ENCODE measurements at regions of chr17 and their contacts with region 1.

Region 1: DNA sequence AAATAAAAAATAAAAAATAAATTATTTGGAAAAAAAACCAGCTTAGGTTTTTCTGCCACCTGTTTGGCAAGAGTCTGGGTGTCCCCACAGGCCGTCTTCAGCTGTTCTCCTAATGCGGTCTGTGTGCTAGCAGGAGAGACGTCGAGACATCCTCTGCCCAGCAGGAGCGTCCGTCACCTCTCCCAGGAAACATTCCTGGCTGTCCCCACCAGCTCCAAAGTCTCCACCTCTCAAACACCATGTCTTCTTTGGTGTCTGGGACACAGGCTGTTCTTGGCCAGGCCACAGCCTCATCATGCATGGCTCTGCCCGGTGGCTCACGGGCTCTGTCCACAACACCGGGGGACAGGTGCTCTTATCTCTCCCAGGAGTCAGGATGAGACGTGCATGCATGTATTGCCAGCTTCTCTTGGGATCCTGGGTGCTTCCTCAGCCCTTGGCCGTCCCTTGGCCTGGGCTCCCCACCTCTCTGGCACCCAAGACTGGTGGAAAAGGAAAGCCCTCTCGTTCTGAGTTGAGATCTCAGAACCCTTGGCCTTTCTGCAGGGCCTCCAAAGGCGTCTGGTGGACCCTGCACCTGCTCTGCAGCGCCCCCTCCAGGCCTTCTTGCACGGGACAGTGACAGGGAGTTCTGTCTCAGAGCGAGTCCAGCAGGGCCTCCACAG is 84.9 kb upstream of the CBX4 start:
- DNase-seq: no peak
- ATAC-seq: 0 out of 3 replicates have a peak, but pooled peaks have one; percentile 16
- H3K4me3 ChIP-seq: no peak overlapping the region
- H3K27ac ChIP-seq: no peak overlapping the region
- H3K4me1 ChIP-seq: peaks cover 21% of the 10 kb centered on the region
- H3K27me3 ChIP-seq: no peaks in the 10 kb centered on the region; a peak in 1 of 4 replicates
- CTCF ChIP-seq: peak; percentile 34 to 65 (median 53)
- EP300 ChIP-seq: no peak
- POLR2A ChIP-seq: no peak
- RAD21 ChIP-seq: peak; percentile 47

Region 2: DNA sequence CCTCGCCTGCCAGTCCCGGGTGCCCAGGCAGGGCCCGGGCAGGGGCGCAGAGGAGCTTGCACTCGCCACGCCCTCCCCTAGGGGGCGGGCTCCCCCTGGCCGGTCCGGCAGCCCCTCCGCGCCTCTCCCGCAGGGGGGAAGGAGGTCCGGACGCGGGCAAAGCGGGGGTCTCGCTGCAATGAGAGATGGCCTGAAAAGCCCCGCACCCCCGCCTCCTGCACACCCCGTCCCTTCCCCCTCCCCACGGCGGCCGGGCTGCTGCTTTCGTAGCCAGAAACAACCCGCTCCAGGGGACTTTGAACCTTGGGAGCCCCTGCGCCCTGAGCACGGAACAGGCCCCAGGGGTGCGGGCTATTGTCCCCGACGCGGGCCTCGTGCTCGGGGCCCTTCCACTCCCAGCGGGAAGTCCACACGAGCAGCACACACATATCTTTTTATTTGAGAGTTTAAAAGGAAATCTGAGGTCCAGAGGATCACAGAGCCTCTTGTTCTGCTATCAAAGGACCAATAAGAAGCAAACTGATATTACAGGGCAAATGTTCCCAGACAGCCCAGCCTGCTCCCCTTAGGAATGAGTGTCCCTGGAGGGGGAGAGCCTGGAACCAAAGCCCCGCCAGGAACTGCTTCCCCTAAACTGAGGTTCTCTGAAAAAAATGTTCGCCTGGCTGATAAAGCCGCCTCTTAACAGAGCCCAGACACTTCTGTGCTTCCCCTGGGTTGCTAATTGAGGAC is 79.1 kb before region 1 on chr17:
- CTCF ChIA-PET with region 1: interaction called, 3 read pairs
- POLR2A ChIA-PET with region 1: no interaction called
- RAD21 ChIA-PET with region 1: interaction called, 5 read pairs
- SMC1A ChIA-PET with region 1: interaction called, 3 read pairs
- in situ Hi-C with region 1: no loop called
- intact Hi-C with region 1: loop called (anchors 5 kb)
- DNase-seq: no peak
- ATAC-seq: peak; percentile 89
- H3K4me3 ChIP-seq: no peak overlapping the region
- H3K27ac ChIP-seq: no peak overlapping the region
- H3K4me1 ChIP-seq: peaks cover 8% of the 10 kb centered on the region
- H3K27me3 ChIP-seq: peaks cover 22 to 45% of the 10 kb centered on the region in 2 experiments
- CTCF ChIP-seq: peak; percentile 42 to 92 (median 70); a peak in 5 of 6 replicates
- EP300 ChIP-seq: no peak
- POLR2A ChIP-seq: no peak
- RAD21 ChIP-seq: peak; percentile 59

Region 3: GRCh38 chr17:80063830-80064585 is 139.9 kb after region 1 on chr17:
- CTCF ChIA-PET with region 1: no interaction called
- POLR2A ChIA-PET with region 1: no interaction called
- RAD21 ChIA-PET with region 1: no interaction called
- SMC1A ChIA-PET with region 1: no interaction called
- in situ Hi-C with region 1: no loop called
- intact Hi-C with region 1: no loop called
- DNase-seq: no peak
- ATAC-seq: no peak
- H3K4me3 ChIP-seq: no peak overlapping the region
- H3K27ac ChIP-seq: no peak overlapping the region
- H3K4me1 ChIP-seq: no peaks in the 10 kb centered on the region
- H3K27me3 ChIP-seq: no peaks in the 10 kb centered on the region
- CTCF ChIP-seq: no peak
- EP300 ChIP-seq: no peak
- POLR2A ChIP-seq: no peak
- RAD21 ChIP-seq: no peak

Measured in GM12878 (cell line).